Heart right ventricle (tissue), 16 donors: ENCODE measurements at regions of chr6 and their contacts with region 1.

Region 1: DNA sequence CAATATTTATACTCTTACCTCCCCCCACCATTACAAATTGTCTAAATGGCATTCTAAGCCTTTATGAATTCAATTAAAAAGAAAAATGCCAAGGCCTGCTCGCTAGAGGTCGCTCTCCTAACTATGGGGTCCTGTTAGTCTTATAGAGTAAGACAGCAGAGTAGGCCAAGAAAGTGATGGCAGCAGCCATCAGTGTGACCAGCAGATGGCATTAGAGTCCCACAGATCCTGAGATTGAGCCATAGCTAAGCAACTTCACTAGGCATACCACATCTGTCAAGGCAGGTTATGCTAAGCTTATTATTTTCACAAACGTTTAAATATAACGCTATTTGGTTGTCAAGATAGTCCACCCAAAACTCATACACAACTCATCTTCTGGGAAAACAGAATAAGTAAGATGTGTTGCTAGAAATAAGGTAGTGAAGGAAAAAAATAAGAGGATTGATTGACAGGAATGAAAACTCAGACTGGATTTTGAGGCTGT is 57.6 kb upstream of the SCAF8 start:
- DNase-seq: peak; percentile 64 to 89
- ATAC-seq: peak; percentile 96 to 99 (median 98)
- H3K4me3 ChIP-seq: no peak overlapping the region
- H3K27ac ChIP-seq: no peak overlapping the region
- H3K4me1 ChIP-seq: no peaks in the 10 kb centered on the region
- H3K27me3 ChIP-seq: no peaks in the 10 kb centered on the region
- CTCF ChIP-seq: peak; percentile 98 to 100 (median 99)

Region 2: GRCh38 chr6:154156135-154156896 is 519.3 kb before region 1 on chr6:
- intact Hi-C with region 1: loop called in 2 of 10 experiments (anchors 5 to 10 kb)
- DNase-seq: peak in 1 of 2 donors; percentile 23
- ATAC-seq: peak in 7 of 8 donors; percentile 49 to 78 (median 65)
- H3K4me3 ChIP-seq: no peak overlapping the region
- H3K27ac ChIP-seq: peak overlapping the region in 1 of 10 donors; percentile 41
- H3K4me1 ChIP-seq: peaks cover 0 to 34% (median 0%) of the 10 kb centered on the region in 9 donors
- H3K27me3 ChIP-seq: no peaks in the 10 kb centered on the region
- CTCF ChIP-seq: peak; percentile 12 to 67 (median 46)

Region 3: GRCh38 chr6:154460306-154461071 is 215.2 kb before region 1 on chr6:
- intact Hi-C with region 1: no loop called
- DNase-seq: no peak
- ATAC-seq: no peak
- H3K4me3 ChIP-seq: no peak overlapping the region
- H3K27ac ChIP-seq: no peak overlapping the region
- H3K4me1 ChIP-seq: peaks cover 0 to 55% (median 19%) of the 10 kb centered on the region in 9 donors
- H3K27me3 ChIP-seq: no peaks in the 10 kb centered on the region
- CTCF ChIP-seq: no peak

Region 4: GRCh38 chr6:154800338-154800737 is 124.7 kb after region 1 on chr6:
- intact Hi-C with region 1: loop called in 9 of 10 experiments (anchors 1 to 10 kb)
- DNase-seq: no peak
- ATAC-seq: no peak
- H3K4me3 ChIP-seq: no peak overlapping the region
- H3K27ac ChIP-seq: no peak overlapping the region
- H3K4me1 ChIP-seq: peaks cover 0 to 7% (median 0%) of the 10 kb centered on the region in 9 donors
- H3K27me3 ChIP-seq: no peaks in the 10 kb centered on the region
- CTCF ChIP-seq: no peak

Region 5: DNA sequence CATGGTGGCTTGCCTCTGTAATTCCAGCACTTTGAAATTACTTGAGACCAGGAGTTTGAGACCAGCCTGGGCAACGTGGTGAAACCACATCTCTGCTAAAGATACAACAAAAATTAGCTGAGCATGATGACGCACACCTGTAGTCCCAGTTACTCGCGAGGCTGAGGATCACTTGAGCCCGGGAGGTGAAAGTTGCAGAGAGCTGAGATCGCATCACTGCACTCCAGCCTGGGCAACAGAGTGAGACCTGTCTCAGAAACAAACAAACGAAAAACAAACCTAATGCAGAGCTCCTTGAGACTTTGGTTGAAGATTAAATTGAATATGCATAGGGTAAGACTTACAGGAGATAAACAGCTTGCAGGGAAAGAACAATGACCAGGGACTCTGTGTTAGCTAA is 138.4 kb after region 1 on chr6:
- intact Hi-C with region 1: loop called in 4 of 10 experiments (anchors 5 to 10 kb)
- DNase-seq: no peak
- ATAC-seq: no peak
- H3K4me3 ChIP-seq: no peak overlapping the region
- H3K27ac ChIP-seq: no peak overlapping the region
- H3K4me1 ChIP-seq: no peaks in the 10 kb centered on the region
- H3K27me3 ChIP-seq: no peaks in the 10 kb centered on the region
- CTCF ChIP-seq: no peak

Region 6: GRCh38 chr6:155103816-155104366 is 428.2 kb after region 1 on chr6:
- intact Hi-C with region 1: no loop called
- DNase-seq: no peak
- ATAC-seq: no peak
- H3K4me3 ChIP-seq: no peak overlapping the region
- H3K27ac ChIP-seq: no peak overlapping the region
- H3K4me1 ChIP-seq: peaks cover 0 to 10% (median 0%) of the 10 kb centered on the region in 9 donors
- H3K27me3 ChIP-seq: no peaks in the 10 kb centered on the region
- CTCF ChIP-seq: no peak

Region 7: GRCh38 chr6:155174576-155175211 is 499.0 kb after region 1 on chr6:
- intact Hi-C with region 1: loop called in 7 of 10 experiments (anchors 5 to 10 kb)
- DNase-seq: peak; percentile 23 to 75
- ATAC-seq: peak; percentile 73 to 88 (median 82)
- H3K4me3 ChIP-seq: no peak overlapping the region
- H3K27ac ChIP-seq: no peak overlapping the region
- H3K4me1 ChIP-seq: peaks cover 0 to 24% (median 13%) of the 10 kb centered on the region in 9 donors
- H3K27me3 ChIP-seq: no peaks in the 10 kb centered on the region
- CTCF ChIP-seq: peak; percentile 27 to 79 (median 70)